Right lobe of liver (tissue), 6 donors: ENCODE measurements at regions of chr12 and their contacts with region 1.

Region 1: DNA sequence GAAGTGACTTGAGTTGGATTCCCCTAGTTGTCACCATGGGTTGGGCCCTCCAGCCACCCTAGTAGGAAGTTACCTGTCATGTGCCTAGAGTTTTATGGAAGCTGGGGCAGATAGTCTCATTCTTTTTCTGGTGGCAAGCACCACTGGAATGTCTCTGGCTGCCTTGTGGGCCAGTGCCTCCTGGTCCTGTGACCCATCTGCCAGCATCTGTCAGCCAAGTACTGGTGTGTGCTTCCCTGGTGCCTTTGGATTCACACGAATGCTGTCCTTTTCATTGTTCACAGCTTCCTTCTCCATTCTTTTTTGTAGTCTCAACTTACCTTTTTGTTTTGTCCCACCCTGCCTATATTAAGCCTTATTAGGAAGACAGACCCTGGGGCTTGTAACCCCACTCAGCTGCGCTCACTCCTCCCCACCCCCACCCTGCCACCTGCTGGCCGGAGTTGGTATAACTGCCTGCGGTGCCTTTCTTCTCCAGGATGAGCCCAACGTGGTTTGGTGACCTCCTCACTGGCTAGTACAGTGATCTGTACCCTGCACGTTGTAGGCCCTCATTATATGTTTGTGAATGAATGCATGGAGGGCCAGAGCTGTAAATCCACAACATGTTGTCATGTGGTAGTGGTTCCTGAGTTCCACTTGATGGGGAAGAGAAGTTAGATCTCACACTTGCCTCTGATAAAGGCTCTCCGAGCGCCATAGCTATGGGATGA is 125.7 kb downstream of the TSPAN9 start:
- DNase-seq: peak in 2 of 3 donors; percentile 50 to 65
- ATAC-seq: peak; percentile 70 to 85 (median 80)
- H3K4me3 ChIP-seq: no peak overlapping the region
- H3K27ac ChIP-seq: no peak overlapping the region
- H3K4me1 ChIP-seq: no peaks in the 10 kb centered on the region
- H3K27me3 ChIP-seq: no peaks in the 10 kb centered on the region
- CTCF ChIP-seq: peak; percentile 81 to 90 (median 86)
- POLR2A ChIP-seq: no peak

Region 2: DNA sequence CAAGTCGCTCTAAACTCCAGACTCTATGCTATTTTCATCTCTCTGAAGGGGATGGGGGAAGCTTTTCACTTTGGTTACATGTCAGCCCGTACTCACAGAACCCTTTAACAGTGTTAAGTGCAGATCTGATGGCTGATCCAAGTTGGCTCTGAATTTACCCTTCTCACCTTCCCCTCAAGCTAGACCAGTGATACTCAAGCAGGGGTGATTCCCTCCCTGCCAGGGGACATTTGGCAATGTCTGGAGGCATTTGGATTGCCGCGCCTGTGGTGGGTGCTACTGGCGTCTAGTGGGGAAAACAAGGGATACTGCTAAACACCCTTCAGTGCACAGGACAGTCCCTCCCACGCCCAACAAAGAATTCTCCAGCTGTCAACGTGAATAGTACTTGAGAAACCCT is 340.0 kb before region 1 on chr12:
- intact Hi-C with region 1: no loop called
- DNase-seq: no peak
- ATAC-seq: no peak
- H3K4me3 ChIP-seq: no peak overlapping the region
- H3K27ac ChIP-seq: no peak overlapping the region
- H3K4me1 ChIP-seq: no peaks in the 10 kb centered on the region
- H3K27me3 ChIP-seq: no peaks in the 10 kb centered on the region
- CTCF ChIP-seq: no peak
- POLR2A ChIP-seq: no peak

Region 3: GRCh38 chr12:3073438-3074250 is 129.2 kb before region 1 on chr12:
- intact Hi-C with region 1: loop called in 1 of 2 experiments (anchors 10 kb)
- DNase-seq: peak; percentile 82 to 87 (median 82)
- ATAC-seq: peak; percentile 50 to 59 (median 52)
- H3K4me3 ChIP-seq: no peak overlapping the region
- H3K27ac ChIP-seq: no peak overlapping the region
- H3K4me1 ChIP-seq: peaks cover 0 to 6% (median 2%) of the 10 kb centered on the region in 4 donors
- H3K27me3 ChIP-seq: no peaks in the 10 kb centered on the region
- CTCF ChIP-seq: peak; percentile 92 to 99 (median 98)
- POLR2A ChIP-seq: no peak

Region 4: GRCh38 chr12:3148366-3149000 is 54.4 kb before region 1 on chr12:
- intact Hi-C with region 1: loop called in 1 of 2 experiments (anchors 10 kb)
- DNase-seq: no peak
- ATAC-seq: peak in 1 of 4 donors; percentile 8
- H3K4me3 ChIP-seq: no peak overlapping the region
- H3K27ac ChIP-seq: no peak overlapping the region
- H3K4me1 ChIP-seq: peaks cover 0 to 14% (median 1%) of the 10 kb centered on the region in 4 donors
- H3K27me3 ChIP-seq: no peaks in the 10 kb centered on the region
- CTCF ChIP-seq: no peak
- POLR2A ChIP-seq: no peak

Region 5: DNA sequence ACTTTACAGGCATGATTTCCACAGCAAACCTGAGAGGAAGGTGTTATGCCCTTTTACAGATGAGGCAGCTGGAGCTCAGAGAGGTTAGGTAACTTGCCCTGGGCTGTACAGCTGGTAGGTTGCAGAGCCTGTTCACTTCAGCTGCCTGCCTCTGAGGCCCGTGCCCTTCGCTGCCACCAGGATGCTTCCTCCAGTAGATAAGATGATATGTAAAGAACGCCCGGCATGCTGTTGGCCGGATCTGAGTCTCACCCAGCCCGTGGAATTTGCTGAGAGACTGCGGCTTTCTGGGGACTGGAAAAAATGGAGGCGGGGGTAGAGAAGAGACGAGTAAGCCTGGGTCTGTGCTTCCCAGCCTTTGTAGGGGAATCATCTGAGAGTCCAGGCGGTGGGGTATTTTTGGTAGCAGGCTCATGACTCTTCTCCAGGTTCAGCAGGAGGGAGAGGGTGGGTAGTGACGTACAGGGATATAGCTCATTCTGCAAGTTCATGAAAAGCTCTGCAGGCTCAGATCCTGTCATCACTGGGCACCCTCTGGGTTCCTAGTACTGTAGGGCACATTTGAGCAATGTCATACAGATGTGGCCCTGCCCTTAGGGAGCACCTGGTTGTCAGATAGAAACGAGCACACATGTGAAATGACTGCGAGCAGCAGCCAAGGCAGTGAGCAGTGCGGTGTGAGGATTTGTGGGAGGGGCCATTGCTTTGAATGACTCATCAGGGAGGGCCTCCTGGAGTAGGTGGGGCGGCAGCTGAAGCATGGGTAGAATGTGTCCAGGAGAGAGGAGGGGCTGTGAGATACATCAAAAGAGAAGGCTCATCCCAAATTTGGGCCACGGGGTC is 33.7 kb after region 1 on chr12:
- intact Hi-C with region 1: no loop called
- DNase-seq: no peak
- ATAC-seq: peak; percentile 19 to 66 (median 37)
- H3K4me3 ChIP-seq: no peak overlapping the region
- H3K27ac ChIP-seq: no peak overlapping the region
- H3K4me1 ChIP-seq: peaks cover 0 to 6% (median 0%) of the 10 kb centered on the region in 4 donors
- H3K27me3 ChIP-seq: no peaks in the 10 kb centered on the region
- CTCF ChIP-seq: no peak
- POLR2A ChIP-seq: no peak